ENCODE measurements at regions of chr4 and their contacts with region 1.

Region 1: DNA sequence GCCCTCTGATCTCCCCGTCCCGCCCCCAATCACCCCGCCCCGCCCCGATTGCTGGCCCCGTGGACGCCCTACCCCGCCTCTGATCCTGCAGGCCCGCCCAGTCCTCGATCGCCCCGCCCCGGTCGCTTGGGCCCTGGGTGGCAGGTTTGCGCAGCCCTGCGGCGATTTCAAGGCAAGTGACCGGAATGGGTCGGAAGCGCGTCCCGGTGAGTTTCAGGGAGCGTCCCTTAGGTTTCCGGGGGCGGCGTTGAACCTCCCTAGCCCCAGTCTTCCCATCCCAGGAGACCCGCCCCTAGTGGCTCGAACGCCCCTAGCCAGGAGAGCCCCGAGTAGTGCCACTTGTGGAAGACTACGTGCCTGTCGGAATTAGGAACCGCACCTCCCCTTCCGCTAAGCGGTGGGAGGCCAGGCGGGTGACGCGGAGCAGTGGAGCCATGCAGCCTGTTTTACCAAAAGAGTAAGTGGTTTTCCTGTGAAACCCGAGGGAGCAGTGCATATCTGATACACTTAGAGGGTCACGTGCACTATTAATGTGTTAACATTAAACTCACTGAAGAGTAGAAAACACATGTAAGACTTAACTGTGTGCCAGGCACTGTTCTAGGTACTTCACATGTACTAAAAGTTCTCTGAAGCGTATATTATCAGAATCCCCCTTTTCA is 354 bp upstream of the TEC start:
- DNase-seq: peak; percentile 94 to 97 (median 97)
- ATAC-seq: peak; percentile 99
- H3K4me3 ChIP-seq: peak overlapping the region; percentile 92
- H3K27ac ChIP-seq: peak overlapping the region; percentile 54
- H3K4me1 ChIP-seq: no peaks in the 10 kb centered on the region
- H3K27me3 ChIP-seq: no peaks in the 10 kb centered on the region

Region 2: DNA sequence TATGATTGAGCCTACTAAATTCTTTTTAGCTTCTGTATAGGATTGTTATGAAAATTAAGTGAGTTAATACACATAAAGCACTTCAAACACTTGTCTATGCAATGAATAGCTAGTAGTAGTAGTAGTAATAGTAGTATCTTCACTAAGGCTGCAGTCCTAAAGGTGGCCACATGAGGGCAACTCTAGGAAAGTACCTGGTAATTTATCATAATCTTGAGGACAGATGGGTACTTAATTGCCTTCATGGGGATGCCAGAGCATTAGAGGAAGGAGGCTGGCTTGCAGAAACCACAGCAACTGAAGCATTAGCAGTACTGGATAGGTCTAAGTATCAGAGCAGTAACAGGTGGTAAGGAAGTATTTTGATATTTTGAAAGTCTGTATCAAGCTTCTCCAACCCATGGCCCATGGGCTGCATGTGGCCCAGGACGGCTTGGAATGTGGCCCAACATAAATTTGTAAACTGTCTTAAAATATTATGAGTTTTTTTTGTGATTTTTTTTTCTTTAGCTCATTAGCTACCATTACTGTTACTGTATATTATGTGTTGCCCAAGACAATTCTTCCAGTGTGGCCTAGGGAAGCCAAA is 236.1 kb before region 1 on chr4:
- intact Hi-C with region 1: no loop called
- DNase-seq: no peak
- ATAC-seq: no peak
- H3K4me3 ChIP-seq: no peak overlapping the region
- H3K27ac ChIP-seq: no peak overlapping the region
- H3K4me1 ChIP-seq: no peaks in the 10 kb centered on the region
- H3K27me3 ChIP-seq: no peaks in the 10 kb centered on the region

Region 3: GRCh38 chr4:48129307-48130014 is 140.5 kb before region 1 on chr4:
- intact Hi-C with region 1: loop called in 1 of 4 experiments (anchors 10 kb)
- DNase-seq: peak; percentile 35 to 76 (median 72)
- ATAC-seq: peak; percentile 40 to 58
- H3K4me3 ChIP-seq: no peak overlapping the region
- H3K27ac ChIP-seq: peak overlapping the region; percentile 73
- H3K4me1 ChIP-seq: peaks cover 6% of the 10 kb centered on the region
- H3K27me3 ChIP-seq: no peaks in the 10 kb centered on the region

Region 4: GRCh38 chr4:48141048-48141447 is 128.9 kb before region 1 on chr4:
- intact Hi-C with region 1: loop called in 2 of 4 experiments (anchors 10 kb)
- DNase-seq: no peak
- ATAC-seq: peak in 1 of 2 donors; percentile 48
- H3K4me3 ChIP-seq: no peak overlapping the region
- H3K27ac ChIP-seq: no peak overlapping the region
- H3K4me1 ChIP-seq: no peaks in the 10 kb centered on the region
- H3K27me3 ChIP-seq: no peaks in the 10 kb centered on the region

Region 5: DNA sequence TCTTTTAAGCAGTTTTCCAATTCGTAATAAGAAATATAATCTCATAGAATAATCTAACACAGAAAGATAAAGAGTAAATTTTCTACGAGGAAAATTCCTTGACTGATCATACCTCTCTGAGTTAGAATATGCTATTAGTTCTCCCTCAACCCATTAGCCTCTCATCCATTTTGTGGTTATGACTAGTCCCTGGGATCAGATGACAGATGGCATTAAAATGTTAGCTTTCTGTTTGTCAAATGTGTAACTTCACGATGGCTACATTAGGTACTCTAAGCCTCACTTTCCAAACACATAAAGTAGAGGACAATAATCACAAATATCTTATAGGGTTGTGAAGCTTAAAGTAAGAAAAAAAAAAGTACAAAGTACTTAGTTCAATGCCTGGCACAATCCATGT is 332.2 kb after region 1 on chr4:
- intact Hi-C with region 1: no loop called
- DNase-seq: no peak
- ATAC-seq: no peak
- H3K4me3 ChIP-seq: no peak overlapping the region
- H3K27ac ChIP-seq: no peak overlapping the region
- H3K4me1 ChIP-seq: peaks cover 4% of the 10 kb centered on the region
- H3K27me3 ChIP-seq: no peaks in the 10 kb centered on the region